ENCODE measurements at regions of chr7 and their contacts with region 1.

Region 1: GRCh38 chr7:134690016-134690415 is 43.4 kb downstream of the BPGM start:
- DNase-seq: no peak
- H3K4me3 Mint-ChIP-seq: no peak overlapping the region
- H3K27ac Mint-ChIP-seq: no peak overlapping the region
- H3K4me1 Mint-ChIP-seq: peaks cover 6% of the 10 kb centered on the region
- H3K27me3 Mint-ChIP-seq: no peaks in the 10 kb centered on the region
- CTCF ChIP-seq: peak; percentile 44

Region 2: GRCh38 chr7:134646425-134647305 is 43.4 kb before region 1 on chr7 and contains the start of gene BPGM:
- CTCF ChIA-PET with region 1: interaction called, 5 read pairs
- POLR2A ChIA-PET with region 1: no interaction called
- intact Hi-C with region 1: loop called (anchors 1 kb)
- DNase-seq: peak; percentile 100
- H3K4me3 Mint-ChIP-seq: no peak within 1 kb of the TSS
- H3K27ac Mint-ChIP-seq: no peak within 1 kb of the TSS
- H3K4me1 Mint-ChIP-seq: peaks cover 8% of the 10 kb centered on the region
- H3K27me3 Mint-ChIP-seq: no peaks in the 10 kb centered on the region
- CTCF ChIP-seq: no peak
- total RNA-seq, gene BPGM: 8.2 and 10.8 TPM in 2 replicates

Region 3: GRCh38 chr7:134724606-134725005 is 34.6 kb after region 1 on chr7:
- CTCF ChIA-PET with region 1: interaction called, 14 read pairs
- POLR2A ChIA-PET with region 1: no interaction called
- intact Hi-C with region 1: no loop called
- DNase-seq: peak; percentile 65
- H3K4me3 Mint-ChIP-seq: no peak overlapping the region
- H3K27ac Mint-ChIP-seq: no peak overlapping the region
- H3K4me1 Mint-ChIP-seq: no peaks in the 10 kb centered on the region
- H3K27me3 Mint-ChIP-seq: no peaks in the 10 kb centered on the region
- CTCF ChIP-seq: peak; percentile 67

Region 4: DNA sequence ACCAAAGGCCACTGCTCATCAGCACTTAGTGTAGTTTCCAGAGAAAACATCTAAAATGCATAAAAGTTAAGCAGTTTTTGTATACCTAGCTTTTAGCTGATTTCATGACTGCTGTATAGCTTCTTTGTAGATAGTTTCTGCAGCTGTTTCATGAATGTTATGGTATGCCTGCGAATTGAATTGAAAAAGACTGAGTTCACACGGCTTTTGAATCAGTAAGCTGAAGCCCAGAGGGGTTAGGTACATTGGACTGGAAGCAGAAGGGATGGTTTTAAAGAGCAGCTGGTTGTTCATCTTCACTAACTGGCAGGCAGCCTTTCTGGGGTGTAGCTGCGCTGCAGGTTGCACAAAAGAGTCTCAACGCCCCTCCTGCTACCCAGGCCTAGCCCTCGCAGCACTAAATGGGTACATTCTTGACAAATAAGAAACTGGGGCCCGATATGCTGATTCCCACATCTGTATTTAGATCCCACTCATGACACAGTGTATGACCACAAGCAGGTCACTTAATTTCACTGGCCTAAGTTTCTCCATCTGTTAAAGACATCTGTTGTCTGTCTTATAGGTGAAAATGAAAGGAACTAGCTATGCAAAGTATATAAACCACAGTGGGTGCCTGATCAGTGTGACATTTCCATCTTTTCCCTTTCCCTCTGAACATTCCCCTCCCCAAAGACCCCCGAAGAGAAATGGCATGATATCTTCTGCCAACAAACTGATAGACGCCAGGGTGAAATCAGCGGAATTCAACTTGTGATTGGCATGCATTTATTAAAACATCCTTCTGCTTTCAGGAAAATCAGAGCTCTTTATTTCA is 210.4 kb after region 1 on chr7:
- CTCF ChIA-PET with region 1: interaction called, 13 read pairs
- POLR2A ChIA-PET with region 1: no interaction called
- intact Hi-C with region 1: no loop called
- DNase-seq: no peak
- H3K4me3 Mint-ChIP-seq: no peak overlapping the region
- H3K27ac Mint-ChIP-seq: peak overlapping the region; percentile 61
- H3K4me1 Mint-ChIP-seq: peaks cover 45% of the 10 kb centered on the region
- H3K27me3 Mint-ChIP-seq: no peaks in the 10 kb centered on the region
- CTCF ChIP-seq: no peak

Region 5: GRCh38 chr7:134943764-134944400 is 253.9 kb after region 1 on chr7:
- CTCF ChIA-PET with region 1: interaction called, 96 read pairs
- POLR2A ChIA-PET with region 1: interaction called, 6 read pairs
- intact Hi-C with region 1: loop called (anchors 2 kb)
- DNase-seq: peak; percentile 42
- H3K4me3 Mint-ChIP-seq: no peak overlapping the region
- H3K27ac Mint-ChIP-seq: no peak overlapping the region
- H3K4me1 Mint-ChIP-seq: peaks cover 10% of the 10 kb centered on the region
- H3K27me3 Mint-ChIP-seq: no peaks in the 10 kb centered on the region
- CTCF ChIP-seq: peak; percentile 52

Region 6: DNA sequence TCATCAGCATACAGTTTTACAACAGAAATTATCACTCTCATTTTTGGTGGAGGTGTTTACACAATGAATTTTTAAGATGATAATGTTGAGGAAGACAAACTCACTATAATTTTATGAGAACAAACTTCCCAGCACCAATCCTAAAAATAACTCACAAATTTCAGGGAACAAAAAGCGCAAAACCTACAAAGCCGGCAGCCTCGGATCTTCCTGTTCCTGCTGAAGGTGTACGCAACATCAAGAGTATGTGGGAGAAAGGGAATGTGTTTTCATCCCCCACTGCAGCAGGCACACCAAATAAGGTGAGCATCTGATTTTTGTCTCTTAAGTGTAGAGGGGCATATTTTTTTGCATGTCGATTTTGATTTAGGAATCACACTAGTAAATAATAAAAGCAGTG is 269.8 kb after region 1 on chr7:
- CTCF ChIA-PET with region 1: interaction called, 62 read pairs
- POLR2A ChIA-PET with region 1: no interaction called
- intact Hi-C with region 1: no loop called
- DNase-seq: no peak
- H3K4me3 Mint-ChIP-seq: no peak overlapping the region
- H3K27ac Mint-ChIP-seq: no peak overlapping the region
- H3K4me1 Mint-ChIP-seq: no peaks in the 10 kb centered on the region
- H3K27me3 Mint-ChIP-seq: no peaks in the 10 kb centered on the region
- CTCF ChIP-seq: no peak